ENCODE measurements at regions of chr5 and their contacts with region 1.

Region 1: GRCh38 chr5:42057254-42057690 is 132.2 kb downstream of the FBXO4 start:
- DNase-seq: peak; percentile 50
- CTCF ChIP-seq: peak; percentile 74

Region 2: DNA sequence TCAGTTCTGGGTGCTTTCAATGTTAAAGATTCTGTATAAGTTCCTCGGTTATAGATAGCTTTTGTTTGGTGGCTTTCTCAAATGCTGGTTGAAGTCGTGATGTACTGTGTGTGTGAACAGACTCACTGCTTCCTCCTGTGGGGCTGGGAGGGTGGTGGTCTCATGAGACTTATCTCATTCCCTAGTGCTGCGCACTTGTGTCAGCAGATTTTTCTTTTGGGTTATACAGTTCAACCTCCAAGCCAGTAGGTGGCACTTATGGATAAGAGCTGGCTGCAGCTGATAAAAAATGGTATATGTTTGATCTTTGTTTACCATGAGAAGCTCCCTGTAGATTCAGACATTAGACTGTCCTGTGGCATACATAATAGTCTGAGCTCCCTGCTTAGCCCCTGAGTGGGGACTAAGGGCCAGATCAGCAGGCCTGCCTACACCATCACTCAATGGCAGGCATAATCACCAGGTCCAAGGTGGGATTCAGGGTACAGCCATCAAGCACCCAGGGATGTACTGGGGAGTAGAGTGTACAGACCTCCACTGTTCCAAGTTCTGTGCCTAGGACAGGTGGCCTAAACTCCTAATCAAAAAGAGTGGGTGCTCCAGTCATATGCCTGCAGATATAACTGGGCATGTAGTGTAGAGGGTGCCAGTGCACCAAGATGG is 361.2 kb before region 1 on chr5:
- in situ Hi-C with region 1: loop called (anchors 25 kb)
- DNase-seq: no peak
- CTCF ChIP-seq: peak; percentile 37